ENCODE measurements at regions of chr1 and their contacts with region 1.

Region 1: GRCh38 chr1:27979151-27979858 is 19.5 kb downstream of the XKR8 start:
- DNase-seq: no peak
- ATAC-seq: peak; percentile 75 to 87 (median 80)
- H3K4me3 ChIP-seq: no peak overlapping the region
- H3K27ac ChIP-seq: no peak overlapping the region
- H3K4me1 ChIP-seq: peaks cover 0 to 8% (median 3%) of the 10 kb centered on the region in 4 donors
- H3K27me3 ChIP-seq: no peaks in the 10 kb centered on the region
- CTCF ChIP-seq: peak; percentile 50 to 69 (median 54)
- POLR2A ChIP-seq: no peak

Region 2: GRCh38 chr1:27858072-27858958 is 121.0 kb before region 1 on chr1:
- intact Hi-C with region 1: loop called in 1 of 2 experiments (anchors 10 kb)
- DNase-seq: peak; percentile 83 to 89 (median 85)
- ATAC-seq: peak; percentile 91 to 94 (median 92)
- H3K4me3 ChIP-seq: no peak overlapping the region
- H3K27ac ChIP-seq: no peak overlapping the region
- H3K4me1 ChIP-seq: no peaks in the 10 kb centered on the region
- H3K27me3 ChIP-seq: no peaks in the 10 kb centered on the region
- CTCF ChIP-seq: peak; percentile 93 to 99 (median 95)
- POLR2A ChIP-seq: no peak

Measured in right lobe of liver (tissue), 6 donors.